ENCODE measurements at regions of chr9 and their contacts with region 1.

Region 1: DNA sequence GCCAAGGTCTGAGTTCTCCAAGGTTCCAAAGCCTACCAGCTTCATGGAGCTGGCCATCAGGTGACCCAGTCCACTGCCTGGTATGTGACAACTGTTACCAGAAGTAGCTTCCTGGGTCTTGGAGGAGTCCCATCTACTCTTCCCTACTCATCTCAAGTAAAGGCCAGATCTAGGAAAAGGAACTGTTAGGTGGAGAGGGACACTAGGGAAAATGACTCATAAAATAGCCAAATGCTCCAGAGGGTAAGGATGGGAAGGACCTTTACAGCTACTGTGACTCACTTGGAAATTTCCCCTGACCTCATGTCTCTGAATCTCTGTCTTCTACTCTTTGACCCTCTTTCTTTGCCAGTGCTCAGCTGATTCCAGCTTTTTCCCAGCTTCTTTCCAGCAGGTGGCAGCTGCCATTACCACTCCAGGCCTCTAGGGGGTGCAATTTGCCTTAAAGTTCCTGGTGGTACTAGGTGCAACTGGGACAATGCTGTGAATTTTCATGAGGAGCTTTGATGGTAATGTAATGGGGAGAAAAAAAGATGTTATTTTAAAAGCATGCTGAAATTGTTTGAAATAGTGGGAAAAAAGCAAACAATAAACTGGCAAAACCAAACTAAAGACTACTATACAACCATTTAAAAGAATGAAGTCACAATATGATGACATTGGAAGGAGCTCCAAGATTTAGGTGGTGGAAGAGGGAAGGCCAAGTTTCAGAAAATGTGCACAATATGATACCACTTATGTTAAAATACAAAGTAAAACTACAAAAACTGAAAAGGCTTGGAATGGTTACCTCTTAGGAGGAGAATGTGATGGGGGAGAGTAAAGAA is 27.1 kb upstream of the MYORG start:
- DNase-seq: peak; percentile 67
- ATAC-seq: no peak
- H3K4me3 Mint-ChIP-seq: no peak overlapping the region
- H3K27ac Mint-ChIP-seq: no peak overlapping the region
- H3K4me1 Mint-ChIP-seq: no peaks in the 10 kb centered on the region
- H3K27me3 Mint-ChIP-seq: no peaks in the 10 kb centered on the region

Region 2: GRCh38 chr9:34332076-34332964 is 71.4 kb before region 1 on chr9:
- CTCF ChIA-PET with region 1: interaction called, 12 read pairs
- DNase-seq: no peak
- ATAC-seq: no peak
- H3K4me3 Mint-ChIP-seq: no peak overlapping the region
- H3K27ac Mint-ChIP-seq: no peak overlapping the region
- H3K4me1 Mint-ChIP-seq: peaks cover 30% of the 10 kb centered on the region
- H3K27me3 Mint-ChIP-seq: no peaks in the 10 kb centered on the region

Region 3: GRCh38 chr9:34387239-34387638 is 16.5 kb before region 1 on chr9:
- CTCF ChIA-PET with region 1: interaction called, 15 read pairs
- DNase-seq: peak; percentile 18
- ATAC-seq: no peak
- H3K4me3 Mint-ChIP-seq: no peak overlapping the region
- H3K27ac Mint-ChIP-seq: no peak overlapping the region
- H3K4me1 Mint-ChIP-seq: no peaks in the 10 kb centered on the region
- H3K27me3 Mint-ChIP-seq: peaks cover 14% of the 10 kb centered on the region

Region 4: GRCh38 chr9:34430843-34431437 is 27.2 kb after region 1 on chr9:
- CTCF ChIA-PET with region 1: interaction called, 15 read pairs
- DNase-seq: peak; percentile 59
- ATAC-seq: no peak
- H3K4me3 Mint-ChIP-seq: no peak overlapping the region
- H3K27ac Mint-ChIP-seq: no peak overlapping the region
- H3K4me1 Mint-ChIP-seq: no peaks in the 10 kb centered on the region
- H3K27me3 Mint-ChIP-seq: no peaks in the 10 kb centered on the region

Region 5: DNA sequence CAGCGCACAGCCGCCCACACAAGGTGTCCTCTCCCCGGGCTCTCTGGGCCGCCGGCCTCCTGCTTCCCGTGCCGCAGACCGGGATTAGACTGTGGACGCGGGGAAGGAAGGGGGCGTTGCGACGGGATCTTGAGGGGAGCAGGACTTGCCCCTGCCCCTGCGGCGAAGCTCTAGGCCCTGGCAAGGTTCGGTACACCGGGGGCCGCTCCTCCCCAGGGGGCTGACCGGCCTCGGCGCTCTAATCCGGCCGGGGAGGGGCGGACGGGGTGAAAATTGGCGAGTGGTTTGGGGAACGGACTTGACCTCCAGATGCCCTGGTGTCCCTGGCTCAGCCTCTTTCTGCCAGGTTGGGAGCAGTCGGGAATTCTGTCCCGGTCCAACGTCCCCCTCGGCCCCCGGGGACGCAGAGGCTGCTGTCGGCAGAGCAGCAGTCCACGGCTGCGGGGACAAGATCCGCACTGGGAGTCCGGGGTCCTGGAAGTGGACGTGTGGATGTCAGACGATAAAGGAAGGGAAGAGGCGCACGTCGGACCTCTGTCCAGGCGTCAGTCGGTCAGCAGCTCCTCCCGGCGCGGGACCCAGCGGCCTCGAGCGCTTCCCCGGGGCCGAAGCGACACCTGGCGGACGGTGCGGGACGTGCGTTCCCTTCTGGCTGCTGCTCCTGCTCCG is 187.6 kb after region 1 on chr9:
- CTCF ChIA-PET with region 1: interaction called, 19 read pairs
- DNase-seq: peak; percentile 80
- ATAC-seq: peak; percentile 91
- H3K4me3 Mint-ChIP-seq: peak overlapping the region; percentile 9
- H3K27ac Mint-ChIP-seq: no peak overlapping the region
- H3K4me1 Mint-ChIP-seq: peaks cover 22% of the 10 kb centered on the region
- H3K27me3 Mint-ChIP-seq: peaks cover 83% of the 10 kb centered on the region

Measured in activated CD8-positive, alpha-beta memory T cell treated with anti-CD3 and anti-CD28 coated beads, Interleukin-2, amount 10 ng/mL, durations not matched to agents 7 days and 5 days (primary cell).